ENCODE measurements at regions of chr19 and their contacts with region 1.

Region 1: GRCh38 chr19:1039646-1040475 is at the start of gene ABCA7:
- DNase-seq: peak; percentile 89 to 98
- H3K4me3 ChIP-seq: peak within 1 kb of the TSS; percentile 54 to 64
- H3K27ac ChIP-seq: peak within 1 kb of the TSS in 1 of 2 donors; percentile 49
- H3K4me1 ChIP-seq: peaks cover 11 to 17% of the 10 kb centered on the region in 2 donors
- H3K27me3 ChIP-seq: no peaks in the 10 kb centered on the region
- CTCF ChIP-seq: no peak
- total RNA-seq, gene ABCA7: 96.6 TPM

Region 2: GRCh38 chr19:984165-984967 is 55.5 kb before region 1 on chr19 and contains the start of gene WDR18:
- intact Hi-C with region 1: no loop called
- DNase-seq: peak; percentile 57 to 96
- H3K4me3 ChIP-seq: peak within 1 kb of the TSS; percentile 63 to 73
- H3K27ac ChIP-seq: peak within 1 kb of the TSS; percentile 83 to 84
- H3K4me1 ChIP-seq: peaks cover 12 to 18% of the 10 kb centered on the region in 2 donors
- H3K27me3 ChIP-seq: no peaks in the 10 kb centered on the region
- CTCF ChIP-seq: peak in 2 of 3 experiments; percentile 11 to 27
- total RNA-seq, gene WDR18: 65.7 TPM

Region 3: GRCh38 chr19:1026189-1027019 is 13.5 kb before region 1 on chr19 and contains the start of gene CNN2:
- intact Hi-C with region 1: loop called (anchors 2 kb)
- DNase-seq: peak in 1 of 2 donors; percentile 90
- H3K4me3 ChIP-seq: peak within 1 kb of the TSS; percentile 95 to 97
- H3K27ac ChIP-seq: peak within 1 kb of the TSS; percentile 99 to 100
- H3K4me1 ChIP-seq: peaks cover 21 to 34% of the 10 kb centered on the region in 2 donors
- H3K27me3 ChIP-seq: no peaks in the 10 kb centered on the region
- CTCF ChIP-seq: no peak
- total RNA-seq, gene CNN2: 79.1 TPM

Region 4: GRCh38 chr19:1094975-1095701 is 55.3 kb after region 1 on chr19 and contains the start of gene POLR2E:
- intact Hi-C with region 1: loop called (anchors 1 kb)
- DNase-seq: peak; percentile 96 to 99
- H3K4me3 ChIP-seq: peak within 1 kb of the TSS; percentile 81 to 96
- H3K27ac ChIP-seq: peak within 1 kb of the TSS; percentile 42 to 58
- H3K4me1 ChIP-seq: peaks cover 15 to 29% of the 10 kb centered on the region in 2 donors
- H3K27me3 ChIP-seq: no peaks in the 10 kb centered on the region
- CTCF ChIP-seq: no peak
- total RNA-seq, gene POLR2E: 72.1 TPM